ENCODE measurements at regions of chr7 and their contacts with region 1.

Region 1: DNA sequence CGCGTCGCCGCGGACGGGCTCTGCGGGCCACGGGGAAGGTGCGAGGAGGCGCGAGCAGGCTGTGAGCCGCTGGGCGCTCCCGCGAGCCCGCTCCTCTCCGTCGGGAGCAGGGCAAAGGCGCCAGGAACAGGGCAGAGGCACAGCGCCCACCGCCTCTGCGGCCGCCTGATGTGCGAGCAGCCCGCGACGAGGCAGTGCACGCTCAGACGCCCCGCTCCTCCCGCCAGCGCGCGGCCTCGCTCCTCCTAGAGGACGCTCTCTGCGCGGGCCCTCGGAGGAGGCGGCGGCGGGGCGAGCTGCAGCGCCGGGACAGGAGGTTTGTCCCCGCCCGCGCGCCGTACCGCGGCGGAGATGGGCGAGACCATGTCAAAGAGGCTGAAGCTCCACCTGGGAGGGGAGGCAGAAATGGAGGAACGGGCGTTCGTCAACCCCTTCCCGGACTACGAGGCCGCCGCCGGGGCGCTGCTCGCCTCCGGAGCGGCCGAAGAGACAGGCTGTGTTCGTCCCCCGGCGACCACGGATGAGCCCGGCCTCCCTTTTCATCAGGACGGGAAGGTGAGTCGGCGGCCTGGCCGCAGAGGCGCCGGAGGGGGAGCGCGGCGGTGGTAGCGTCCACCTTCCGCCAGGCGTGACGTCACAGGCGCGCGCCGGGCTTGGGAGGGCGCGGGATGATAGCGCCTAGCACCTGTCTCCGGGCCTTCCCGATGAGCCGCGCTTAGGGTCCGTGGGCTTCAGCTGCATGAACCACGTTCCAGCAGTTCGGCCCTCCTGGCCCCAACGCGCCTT is 731 bp downstream of the LANCL2 start:
- DNase-seq: peak; percentile 93
- H3K4me3 Mint-ChIP-seq: peak overlapping the region; percentile 92
- H3K27ac Mint-ChIP-seq: peak overlapping the region; percentile 96
- H3K4me1 Mint-ChIP-seq: peaks cover 8% of the 10 kb centered on the region
- H3K27me3 Mint-ChIP-seq: no peaks in the 10 kb centered on the region

Region 2: DNA sequence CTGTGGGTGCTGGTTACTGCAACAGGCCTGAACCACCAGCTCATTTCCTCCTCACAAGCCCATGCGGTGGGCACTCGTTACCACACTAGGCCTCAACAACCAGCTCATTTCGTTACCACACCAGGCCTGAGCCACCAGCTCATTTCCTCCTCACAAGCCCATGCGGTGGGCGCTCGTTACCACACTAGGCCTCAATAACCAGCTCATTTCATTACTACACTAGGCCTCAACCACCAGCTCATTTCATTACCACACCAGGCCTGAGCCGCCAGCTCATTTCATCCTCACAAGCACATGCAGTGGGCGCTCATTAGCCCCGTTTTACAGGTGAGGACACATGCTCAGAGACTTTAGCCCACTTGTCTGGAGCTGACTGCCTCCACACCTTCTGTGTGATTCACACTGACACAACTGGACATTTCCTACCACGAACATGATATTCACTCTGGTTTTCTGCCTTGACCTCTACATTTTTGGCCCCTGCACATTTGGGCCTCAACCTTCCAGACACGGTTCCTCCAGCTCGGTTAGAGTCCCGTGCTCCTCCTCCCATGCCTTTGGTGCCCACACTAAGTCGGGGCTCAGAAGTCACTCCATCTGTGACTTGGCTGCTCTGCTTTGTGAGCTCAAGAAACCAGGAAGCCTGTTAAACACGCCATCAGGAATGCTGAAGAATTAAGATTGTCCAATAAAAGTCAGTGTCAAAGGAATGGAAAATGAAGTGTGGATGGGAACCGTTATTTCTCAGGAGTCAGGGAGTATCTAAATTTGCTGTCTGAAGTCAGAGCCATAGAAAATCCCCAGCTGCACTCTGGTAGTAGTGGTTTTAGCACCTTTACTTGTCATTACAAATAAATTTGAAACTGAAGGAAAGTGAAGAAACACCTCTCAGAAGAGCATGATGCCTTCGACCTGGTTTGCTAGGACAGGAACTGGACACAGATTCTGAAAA is 56.6 kb before region 1 on chr7:
- CTCF ChIA-PET with region 1: no interaction called
- intact Hi-C with region 1: loop called (anchors 1 kb)
- DNase-seq: peak; percentile 70
- H3K4me3 Mint-ChIP-seq: no peak overlapping the region
- H3K27ac Mint-ChIP-seq: no peak overlapping the region
- H3K4me1 Mint-ChIP-seq: peaks cover 10% of the 10 kb centered on the region
- H3K27me3 Mint-ChIP-seq: no peaks in the 10 kb centered on the region

Region 3: DNA sequence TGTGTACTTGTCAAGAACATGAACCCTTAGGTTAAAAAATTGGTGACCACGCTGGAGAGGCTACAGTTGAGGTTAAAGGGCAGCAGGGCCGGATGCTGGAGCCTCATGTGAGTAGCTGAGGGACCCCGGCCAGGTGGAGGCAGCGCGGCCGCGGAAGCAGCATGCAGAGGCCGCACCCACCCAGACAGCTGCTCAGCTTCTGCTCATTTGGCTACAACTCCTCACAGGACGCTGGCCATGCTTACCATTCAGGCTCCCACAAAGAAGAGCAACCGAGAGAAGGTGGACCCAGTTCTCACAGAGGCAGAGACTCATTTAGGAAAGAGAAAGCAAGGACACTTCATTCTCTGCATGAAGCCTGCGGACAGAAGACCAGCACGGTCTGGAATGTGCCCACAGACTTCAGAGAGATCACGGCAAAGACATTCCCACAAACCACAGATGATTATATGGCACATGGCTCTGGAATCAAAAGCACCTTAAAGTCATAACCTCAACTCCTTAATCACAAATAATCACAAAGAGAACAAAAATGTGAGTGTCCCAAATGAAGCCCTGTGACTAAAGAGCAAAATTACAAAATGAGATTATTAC is 112.0 kb after region 1 on chr7:
- CTCF ChIA-PET with region 1: no interaction called
- intact Hi-C with region 1: no loop called
- DNase-seq: no peak
- H3K4me3 Mint-ChIP-seq: no peak overlapping the region
- H3K27ac Mint-ChIP-seq: no peak overlapping the region
- H3K4me1 Mint-ChIP-seq: peaks cover 86% of the 10 kb centered on the region
- H3K27me3 Mint-ChIP-seq: no peaks in the 10 kb centered on the region

Region 4: GRCh38 chr7:55515569-55516279 is 149.9 kb after region 1 on chr7:
- CTCF ChIA-PET with region 1: no interaction called
- intact Hi-C with region 1: loop called (anchors 5 kb)
- DNase-seq: peak; percentile 56
- H3K4me3 Mint-ChIP-seq: peak overlapping the region; percentile 36
- H3K27ac Mint-ChIP-seq: peak overlapping the region; percentile 90
- H3K4me1 Mint-ChIP-seq: peaks cover 77% of the 10 kb centered on the region
- H3K27me3 Mint-ChIP-seq: no peaks in the 10 kb centered on the region

Region 5: GRCh38 chr7:55593515-55594318 is 227.8 kb after region 1 on chr7:
- CTCF ChIA-PET with region 1: no interaction called
- intact Hi-C with region 1: loop called (anchors 5 kb)
- DNase-seq: peak; percentile 87
- H3K4me3 Mint-ChIP-seq: no peak overlapping the region
- H3K27ac Mint-ChIP-seq: no peak overlapping the region
- H3K4me1 Mint-ChIP-seq: peaks cover 17% of the 10 kb centered on the region
- H3K27me3 Mint-ChIP-seq: peaks cover 2% of the 10 kb centered on the region

Region 6: DNA sequence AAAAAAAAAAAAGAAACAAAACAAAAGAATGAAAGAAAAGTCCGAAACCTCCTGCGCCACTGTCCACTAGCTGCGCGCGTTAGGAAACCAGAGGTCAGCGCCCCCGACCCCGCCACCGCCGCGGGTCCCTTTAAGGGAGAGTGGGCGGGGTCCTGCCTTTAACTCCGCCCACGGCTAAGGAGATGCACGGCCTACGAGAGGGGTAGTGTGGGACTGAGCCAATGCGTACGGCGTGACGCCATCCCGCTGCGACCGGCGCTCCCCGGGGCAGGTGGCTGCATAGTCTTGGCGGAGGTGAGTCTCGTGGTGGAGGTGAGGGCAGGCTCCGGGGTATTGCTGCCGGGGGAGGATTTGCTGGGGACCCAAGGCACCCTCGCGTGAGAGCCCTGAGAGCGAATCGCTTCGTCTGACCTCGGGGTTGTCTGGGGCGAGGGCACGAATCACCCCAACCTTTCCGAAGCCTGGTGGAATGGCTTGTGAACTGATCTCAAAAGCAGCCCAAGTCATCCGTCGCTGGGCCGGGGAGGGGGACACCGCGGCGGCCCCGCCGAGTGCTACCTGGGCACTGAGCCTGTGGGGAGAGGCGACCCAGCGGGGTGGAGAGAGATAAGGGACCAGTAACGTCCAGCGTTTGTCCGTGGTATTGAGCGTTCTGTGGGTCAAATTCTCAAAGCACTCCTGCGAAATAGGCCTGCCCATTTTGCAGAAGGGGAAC is 585.9 kb after region 1 on chr7 and contains the start of gene MRPS17:
- CTCF ChIA-PET with region 1: no interaction called
- intact Hi-C with region 1: loop called (anchors 1 kb)
- DNase-seq: peak; percentile 96
- H3K4me3 Mint-ChIP-seq: peak within 1 kb of the TSS; percentile 99
- H3K27ac Mint-ChIP-seq: peak within 1 kb of the TSS; percentile 94
- H3K4me1 Mint-ChIP-seq: peaks cover 28% of the 10 kb centered on the region
- H3K27me3 Mint-ChIP-seq: peaks cover 2% of the 10 kb centered on the region
- total RNA-seq, gene MRPS17: 17.3 to 18.7 TPM

Measured in activated naive CD4-positive, alpha-beta T cell treated with anti-CD3 and anti-CD28 coated beads for 36 hours (primary cell).